GM12878 (cell line): ENCODE measurements at regions of chr17 and their contacts with region 1.

Region 1: DNA sequence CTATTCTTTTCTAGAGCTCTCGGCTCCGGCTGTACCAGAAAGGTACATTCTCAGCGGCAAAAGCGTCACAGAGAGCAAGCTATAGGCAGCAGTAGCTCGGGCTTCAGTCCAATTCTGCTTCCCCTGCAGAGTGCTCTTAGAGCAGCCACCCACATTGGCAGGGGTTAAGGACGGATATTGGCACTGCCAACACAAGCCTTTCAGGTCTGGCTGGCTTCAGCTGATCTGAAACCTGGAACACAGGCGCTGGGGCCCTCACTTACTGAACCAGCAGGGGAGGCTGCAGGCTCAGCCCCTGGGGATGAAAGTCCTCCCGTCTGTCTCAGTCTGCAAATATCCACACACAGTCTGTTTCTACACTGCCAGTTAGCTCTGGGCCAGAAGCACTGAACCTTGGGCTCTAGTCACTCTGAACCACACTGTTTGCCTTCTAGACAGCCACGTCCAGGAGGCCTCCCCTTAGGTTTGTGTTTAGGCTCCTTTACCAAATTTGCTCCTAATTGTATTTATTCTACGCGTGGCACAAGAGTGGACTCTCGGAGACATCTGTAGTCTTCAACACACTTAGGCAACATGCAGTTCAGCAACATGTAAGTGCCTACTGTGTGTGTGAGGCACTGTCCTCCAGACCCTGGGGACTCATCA is 40.1 kb downstream of the HIC1 start:
- DNase-seq: no peak
- ATAC-seq: peak; percentile 43
- H3K4me3 ChIP-seq: no peak overlapping the region
- H3K27ac ChIP-seq: no peak overlapping the region
- H3K4me1 ChIP-seq: peaks cover 26% of the 10 kb centered on the region
- H3K27me3 ChIP-seq: no peaks in the 10 kb centered on the region
- CTCF ChIP-seq: peak; percentile 36 to 68 (median 58); a peak in 5 of 6 replicates
- EP300 ChIP-seq: no peak
- POLR2A ChIP-seq: no peak
- RAD21 ChIP-seq: peak; percentile 79

Region 2: DNA sequence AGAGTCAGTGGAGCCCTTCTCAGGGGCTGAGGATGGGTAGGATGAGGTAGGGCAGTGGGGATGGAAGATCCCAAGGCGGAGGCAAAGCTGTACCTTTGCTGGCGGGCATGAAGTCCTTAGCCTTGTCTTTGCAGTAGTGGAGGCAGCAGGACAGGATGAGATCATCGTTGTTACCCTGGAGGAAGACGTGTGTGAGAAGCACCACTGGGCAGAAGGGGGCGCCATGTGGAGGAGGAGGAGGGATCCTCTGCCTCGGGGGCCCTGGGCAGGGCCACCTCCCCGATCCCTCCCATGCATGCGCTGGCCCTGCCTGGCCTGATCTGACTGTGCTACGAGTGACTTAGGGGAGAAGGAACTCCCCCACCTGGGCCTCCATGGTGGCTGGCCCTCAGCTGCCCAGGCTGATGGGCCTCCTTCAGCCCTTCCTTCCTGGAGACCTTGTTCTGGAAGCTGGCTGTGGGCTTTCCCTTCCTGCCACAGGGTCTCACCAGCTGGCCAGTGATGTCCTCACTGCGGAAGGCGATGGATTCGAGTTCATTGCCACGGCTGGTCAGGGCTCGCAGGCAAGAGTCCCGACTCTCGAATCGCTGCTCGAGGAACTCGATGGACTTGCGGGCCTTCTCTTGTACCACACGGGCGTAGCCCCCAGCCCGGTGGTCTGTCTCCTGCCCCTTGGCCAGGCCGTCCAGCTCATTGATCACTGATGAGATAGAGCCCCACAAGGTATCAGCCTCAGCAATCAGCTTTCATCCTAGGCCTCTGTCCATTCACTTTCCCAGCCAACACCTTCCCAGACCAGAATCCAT is 29.8 kb before region 1 on chr17:
- CTCF ChIA-PET with region 1: interaction called, 106 read pairs
- POLR2A ChIA-PET with region 1: interaction called, 148 read pairs
- RAD21 ChIA-PET with region 1: interaction called, 160 read pairs
- SMC1A ChIA-PET with region 1: interaction called, 107 read pairs
- in situ Hi-C with region 1: no loop called
- intact Hi-C with region 1: no loop called
- DNase-seq: no peak
- ATAC-seq: peak; percentile 72
- H3K4me3 ChIP-seq: no peak overlapping the region
- H3K27ac ChIP-seq: peak overlapping the region; percentile 34
- H3K4me1 ChIP-seq: peaks cover 47% of the 10 kb centered on the region
- H3K27me3 ChIP-seq: no peaks in the 10 kb centered on the region
- CTCF ChIP-seq: peak; percentile 44 to 61 (median 50)
- EP300 ChIP-seq: no peak
- POLR2A ChIP-seq: peak; percentile 73; the same call in 1 of the 2 replicates
- RAD21 ChIP-seq: peak; percentile 61

Region 3: GRCh38 chr17:2122641-2123302 is 27.8 kb after region 1 on chr17:
- CTCF ChIA-PET with region 1: interaction called, 16 read pairs
- POLR2A ChIA-PET with region 1: interaction called, 6 read pairs
- RAD21 ChIA-PET with region 1: interaction called, 10 read pairs
- SMC1A ChIA-PET with region 1: interaction called, 49 read pairs
- in situ Hi-C with region 1: no loop called
- intact Hi-C with region 1: no loop called
- DNase-seq: no peak
- ATAC-seq: peak; percentile 79
- H3K4me3 ChIP-seq: no peak overlapping the region
- H3K27ac ChIP-seq: peak overlapping the region; percentile 65
- H3K4me1 ChIP-seq: peaks cover 23% of the 10 kb centered on the region
- H3K27me3 ChIP-seq: no peaks in the 10 kb centered on the region
- CTCF ChIP-seq: 0 out of 6 replicates have a peak, but pooled peaks of 2 of the 3 experiments have one; percentile 1 to 7
- EP300 ChIP-seq: no peak
- POLR2A ChIP-seq: no peak
- RAD21 ChIP-seq: peak; percentile 19; the same call in 1 of the 2 replicates

Region 4: GRCh38 chr17:2215616-2216364 is 120.8 kb after region 1 on chr17:
- CTCF ChIA-PET with region 1: no interaction called
- POLR2A ChIA-PET with region 1: interaction called, 6 read pairs
- RAD21 ChIA-PET with region 1: interaction called, 22 read pairs
- SMC1A ChIA-PET with region 1: interaction called, 5 read pairs
- in situ Hi-C with region 1: no loop called
- intact Hi-C with region 1: no loop called
- DNase-seq: no peak
- ATAC-seq: peak; percentile 99
- H3K4me3 ChIP-seq: peak overlapping the region; percentile 77
- H3K27ac ChIP-seq: peak overlapping the region; percentile 100
- H3K4me1 ChIP-seq: peaks cover 32% of the 10 kb centered on the region
- H3K27me3 ChIP-seq: no peaks in the 10 kb centered on the region
- CTCF ChIP-seq: 0 out of 6 replicates have a peak, but pooled peaks of 1 of the 3 experiments have one; percentile 6
- EP300 ChIP-seq: no peak
- POLR2A ChIP-seq: peak; percentile 90
- RAD21 ChIP-seq: 0 out of 2 replicates have a peak, but pooled peaks have one; percentile 1

Region 5: GRCh38 chr17:2238432-2239169 is 143.6 kb after region 1 on chr17:
- CTCF ChIA-PET with region 1: interaction called, 126 read pairs
- POLR2A ChIA-PET with region 1: interaction called, 20 read pairs
- RAD21 ChIA-PET with region 1: interaction called, 40 read pairs
- SMC1A ChIA-PET with region 1: interaction called, 39 read pairs
- in situ Hi-C with region 1: no loop called
- intact Hi-C with region 1: no loop called
- DNase-seq: peak; percentile 86
- ATAC-seq: peak; percentile 88
- H3K4me3 ChIP-seq: peak overlapping the region; percentile 45; the same call in 1 of the 2 replicates
- H3K27ac ChIP-seq: peak overlapping the region; percentile 99
- H3K4me1 ChIP-seq: peaks cover 50% of the 10 kb centered on the region
- H3K27me3 ChIP-seq: no peaks in the 10 kb centered on the region
- CTCF ChIP-seq: no peak
- EP300 ChIP-seq: 0 out of 4 replicates have a peak, but pooled peaks of 1 of the 2 experiments have one; percentile 34
- POLR2A ChIP-seq: peak; percentile 62
- RAD21 ChIP-seq: no peak

Region 6: DNA sequence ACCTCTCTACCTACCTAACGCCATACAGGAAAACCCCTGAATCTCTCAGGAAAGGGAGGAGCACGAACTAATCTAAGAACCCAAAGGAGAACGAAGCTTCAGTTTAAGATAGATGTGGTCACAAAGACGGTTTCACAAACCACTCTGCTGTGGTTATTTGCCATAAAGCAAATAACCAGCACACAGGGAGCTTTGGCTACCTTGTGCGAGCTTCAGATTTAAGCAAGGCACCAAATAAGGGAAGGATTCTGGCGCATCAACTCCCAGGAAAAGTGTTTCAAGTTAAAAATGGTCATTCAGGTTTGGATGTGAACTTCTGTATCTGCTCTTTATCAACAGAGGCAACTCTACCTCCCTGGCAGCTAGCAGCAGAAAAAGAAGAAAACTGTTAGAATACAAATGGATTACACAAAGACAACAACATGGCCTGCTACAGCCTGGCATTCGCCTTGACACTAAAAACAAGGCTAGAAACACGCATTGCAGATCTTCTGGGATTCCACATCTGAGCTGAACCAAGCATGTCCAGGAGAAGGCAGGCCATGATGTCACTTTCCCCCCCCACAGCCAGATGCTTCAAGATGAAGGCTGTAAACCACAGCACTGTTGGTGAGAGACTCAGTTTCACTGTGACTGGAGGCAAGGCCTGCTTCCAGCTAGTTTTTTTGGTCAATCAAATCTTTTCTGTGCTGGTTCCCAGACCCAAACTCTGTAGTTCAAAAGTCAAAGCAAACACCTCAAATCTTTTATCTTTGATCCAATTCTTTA is 164.9 kb after region 1 on chr17:
- CTCF ChIA-PET with region 1: interaction called, 8 read pairs
- POLR2A ChIA-PET with region 1: interaction called, 69 read pairs
- RAD21 ChIA-PET with region 1: interaction called, 61 read pairs
- SMC1A ChIA-PET with region 1: interaction called, 50 read pairs
- in situ Hi-C with region 1: no loop called
- intact Hi-C with region 1: no loop called
- DNase-seq: peak; percentile 85
- ATAC-seq: peak; percentile 91
- H3K4me3 ChIP-seq: peak overlapping the region; percentile 44; the same call in 1 of the 2 replicates
- H3K27ac ChIP-seq: peak overlapping the region; percentile 99
- H3K4me1 ChIP-seq: peaks cover 64% of the 10 kb centered on the region
- H3K27me3 ChIP-seq: no peaks in the 10 kb centered on the region
- CTCF ChIP-seq: no peak
- EP300 ChIP-seq: peak; percentile 67 to 80
- POLR2A ChIP-seq: peak; percentile 61
- RAD21 ChIP-seq: no peak

Region 7: DNA sequence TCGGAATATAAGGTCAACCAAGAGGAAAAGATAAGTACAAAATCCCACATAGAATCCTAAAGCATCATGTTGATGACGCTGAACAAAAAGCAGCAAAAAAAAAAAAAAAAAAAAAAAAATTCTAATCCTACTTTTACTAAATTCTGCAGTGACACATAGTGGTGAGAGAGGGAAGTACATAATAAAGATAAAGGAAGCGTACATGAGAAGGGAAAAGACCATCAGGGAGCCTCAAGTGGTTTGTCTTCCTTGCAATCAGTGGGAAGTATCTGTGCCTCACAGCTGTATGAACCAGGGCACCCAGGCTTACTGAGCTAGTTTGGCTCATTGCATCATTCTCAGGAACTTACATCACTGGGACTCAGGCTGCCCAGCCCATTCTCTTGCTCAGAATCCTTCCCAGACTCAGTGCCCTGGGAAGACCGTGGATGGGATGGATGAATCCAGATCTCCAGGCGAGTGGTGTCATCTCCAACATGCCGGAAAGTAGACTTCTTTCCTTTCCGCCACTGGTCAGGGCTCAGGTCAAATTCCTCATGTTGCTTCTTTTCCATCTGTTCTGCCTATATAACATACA is 187.4 kb after region 1 on chr17:
- CTCF ChIA-PET with region 1: interaction called, 16 read pairs
- POLR2A ChIA-PET with region 1: no interaction called
- RAD21 ChIA-PET with region 1: interaction called, 4 read pairs
- SMC1A ChIA-PET with region 1: interaction called, 19 read pairs
- in situ Hi-C with region 1: no loop called
- intact Hi-C with region 1: no loop called
- DNase-seq: no peak
- ATAC-seq: peak; percentile 50; the same call in 2 of the 3 replicates
- H3K4me3 ChIP-seq: no peak overlapping the region
- H3K27ac ChIP-seq: peak overlapping the region; percentile 37
- H3K4me1 ChIP-seq: 0 out of 2 replicates have a peak, but pooled peaks cover 3% of the 10 kb centered on the region
- H3K27me3 ChIP-seq: no peaks in the 10 kb centered on the region
- CTCF ChIP-seq: peak; percentile 37 to 64 (median 59); a peak in 4 of 6 replicates
- EP300 ChIP-seq: no peak
- POLR2A ChIP-seq: no peak
- RAD21 ChIP-seq: peak; percentile 73